ENCODE measurements at regions of chr6 and their contacts with region 1.

Region 1: GRCh38 chr6:50791900-50792508 is 26.7 kb upstream of the TFAP2B start:
- DNase-seq: peak; percentile 69
- H3K4me3 ChIP-seq: no peak overlapping the region
- H3K27ac ChIP-seq: no peak overlapping the region
- H3K4me1 ChIP-seq: no peaks in the 10 kb centered on the region
- H3K27me3 ChIP-seq: peaks cover 85% of the 10 kb centered on the region
- CTCF ChIP-seq: peak; percentile 87

Region 2: GRCh38 chr6:49939993-49940498 is 852.0 kb before region 1 on chr6:
- CTCF ChIA-PET with region 1: no interaction called
- POLR2A ChIA-PET with region 1: no interaction called
- intact Hi-C with region 1: no loop called
- DNase-seq: no peak
- H3K4me3 ChIP-seq: no peak overlapping the region
- H3K27ac ChIP-seq: no peak overlapping the region
- H3K4me1 ChIP-seq: no peaks in the 10 kb centered on the region
- H3K27me3 ChIP-seq: no peaks in the 10 kb centered on the region
- CTCF ChIP-seq: no peak

Region 3: GRCh38 chr6:50128420-50129005 is 663.5 kb before region 1 on chr6:
- CTCF ChIA-PET with region 1: no interaction called
- POLR2A ChIA-PET with region 1: no interaction called
- intact Hi-C with region 1: loop called (anchors 5 kb)
- DNase-seq: peak; percentile 19
- H3K4me3 ChIP-seq: no peak overlapping the region
- H3K27ac ChIP-seq: no peak overlapping the region
- H3K4me1 ChIP-seq: no peaks in the 10 kb centered on the region
- H3K27me3 ChIP-seq: peaks cover 25% of the 10 kb centered on the region
- CTCF ChIP-seq: peak; percentile 65

Region 4: DNA sequence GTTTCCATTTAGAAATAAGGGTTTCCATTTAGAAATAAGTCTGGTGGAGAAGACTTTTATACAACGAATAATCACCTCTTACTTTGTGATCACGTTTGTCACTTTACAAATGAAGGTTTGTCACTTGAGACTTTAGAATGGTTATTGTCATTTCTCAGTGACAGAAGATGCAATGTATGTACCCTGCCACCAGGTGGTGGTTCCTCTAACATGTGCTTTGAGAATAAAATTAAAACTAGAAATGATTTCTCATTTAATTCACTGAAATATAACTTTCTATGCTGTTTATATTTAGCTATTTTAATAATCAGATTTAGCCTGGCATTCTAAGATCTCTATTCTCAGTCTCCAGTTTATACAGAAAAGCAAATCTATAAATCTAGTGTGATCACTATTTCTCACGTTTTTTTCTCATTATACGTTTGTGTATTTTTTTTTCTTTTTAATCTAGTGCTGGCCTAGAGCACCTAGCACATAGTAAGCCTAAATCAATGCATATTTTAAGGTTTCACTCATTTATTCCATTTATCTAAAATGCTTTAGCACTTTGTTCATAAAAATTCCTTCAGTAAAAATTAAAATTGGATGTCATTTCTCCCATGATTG is 136.1 kb before region 1 on chr6:
- CTCF ChIA-PET with region 1: no interaction called
- POLR2A ChIA-PET with region 1: no interaction called
- intact Hi-C with region 1: loop called (anchors 2 kb)
- DNase-seq: peak; percentile 39
- H3K4me3 ChIP-seq: no peak overlapping the region
- H3K27ac ChIP-seq: no peak overlapping the region
- H3K4me1 ChIP-seq: no peaks in the 10 kb centered on the region
- H3K27me3 ChIP-seq: peaks cover 14% of the 10 kb centered on the region
- CTCF ChIP-seq: peak; percentile 69